WTC11 (cell line): ENCODE measurements at regions of chr12 and their contacts with region 1.

Region 1: GRCh38 chr12:117850048-117850447 is 118.7 kb downstream of the KSR2 start:
- DNase-seq: peak; percentile 45
- ATAC-seq: peak; percentile 88
- H3K4me3 Mint-ChIP-seq: no peak overlapping the region
- H3K27ac Mint-ChIP-seq: no peak overlapping the region
- H3K4me1 Mint-ChIP-seq: peaks cover 28% of the 10 kb centered on the region
- H3K27me3 Mint-ChIP-seq: no peaks in the 10 kb centered on the region
- CTCF ChIP-seq: peak; percentile 92

Region 2: DNA sequence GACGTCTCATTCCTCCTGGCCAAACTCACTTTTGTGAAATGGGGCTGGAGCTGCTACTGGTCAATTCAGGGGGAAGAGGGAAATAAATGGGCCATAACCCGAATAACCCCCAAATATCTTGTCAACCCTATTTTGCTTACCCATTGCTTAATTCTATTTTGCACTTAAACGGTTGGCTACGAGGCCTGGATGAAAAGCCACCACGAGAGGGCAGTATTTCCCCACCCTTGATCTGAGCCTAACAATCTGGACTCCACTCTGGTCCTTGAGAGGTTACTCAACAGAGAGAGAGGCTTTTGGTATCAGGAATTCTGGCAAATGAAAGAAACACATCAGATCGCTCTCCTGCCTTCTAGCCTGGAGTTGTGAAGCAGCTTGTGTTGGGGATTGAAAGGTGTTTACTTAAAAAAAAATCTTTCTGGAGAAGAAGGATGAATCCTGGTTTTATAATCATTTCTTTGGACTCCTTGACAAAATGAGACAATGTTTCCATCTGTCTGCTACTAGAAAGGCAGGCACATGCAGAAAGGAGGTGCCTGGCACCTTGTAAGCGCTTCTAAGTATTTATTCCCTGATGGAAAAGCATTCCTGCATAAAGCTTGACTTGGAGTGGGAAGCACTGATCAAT is 637.4 kb before region 1 on chr12:
- CTCF ChIA-PET with region 1: interaction called, 10 read pairs
- POLR2A ChIA-PET with region 1: no interaction called
- DNase-seq: peak; percentile 80
- ATAC-seq: peak; percentile 84
- H3K4me3 Mint-ChIP-seq: no peak overlapping the region
- H3K27ac Mint-ChIP-seq: 0 out of 2 replicates have a peak overlapping the region, but pooled peaks have one; percentile 11
- H3K4me1 Mint-ChIP-seq: peaks cover 13% of the 10 kb centered on the region
- H3K27me3 Mint-ChIP-seq: no peaks in the 10 kb centered on the region; the same call in 1 of the 2 replicates
- CTCF ChIP-seq: peak; percentile 70

Region 3: DNA sequence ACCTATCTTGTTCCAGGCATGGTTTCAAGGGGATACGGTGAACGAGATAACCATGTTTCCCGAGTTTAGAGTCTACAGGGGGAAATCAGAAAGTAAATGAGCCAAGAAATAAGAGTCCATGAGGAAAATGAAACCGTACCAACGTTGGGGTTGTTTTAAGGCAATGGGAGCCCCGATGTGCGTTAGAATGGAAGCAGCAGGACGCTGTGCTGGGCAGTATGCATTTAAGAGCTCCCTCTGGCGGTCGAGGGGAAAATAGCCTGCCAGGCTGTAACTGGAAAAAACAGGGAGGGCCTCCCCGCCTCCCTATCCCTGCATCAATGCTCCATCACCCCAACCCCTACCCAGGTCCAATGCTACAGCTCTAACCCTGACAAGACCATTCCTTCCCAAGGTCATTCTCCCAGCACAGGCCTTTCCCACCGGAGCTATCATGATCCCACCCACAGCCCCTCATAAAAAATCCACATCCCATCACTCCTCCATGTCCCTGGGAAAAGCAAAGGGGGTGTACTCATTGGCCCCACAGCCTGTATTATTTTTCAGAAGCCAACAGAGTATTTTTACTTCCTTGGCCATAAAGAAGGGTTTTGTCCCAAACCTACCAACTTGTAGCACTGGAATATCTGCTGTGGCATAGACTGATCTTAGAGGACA is 262.3 kb before region 1 on chr12:
- CTCF ChIA-PET with region 1: interaction called, 23 read pairs
- POLR2A ChIA-PET with region 1: no interaction called
- DNase-seq: peak; percentile 81
- ATAC-seq: peak; percentile 86
- H3K4me3 Mint-ChIP-seq: no peak overlapping the region
- H3K27ac Mint-ChIP-seq: no peak overlapping the region
- H3K4me1 Mint-ChIP-seq: peaks cover 39% of the 10 kb centered on the region
- H3K27me3 Mint-ChIP-seq: no peaks in the 10 kb centered on the region
- CTCF ChIP-seq: peak; percentile 91

Region 4: DNA sequence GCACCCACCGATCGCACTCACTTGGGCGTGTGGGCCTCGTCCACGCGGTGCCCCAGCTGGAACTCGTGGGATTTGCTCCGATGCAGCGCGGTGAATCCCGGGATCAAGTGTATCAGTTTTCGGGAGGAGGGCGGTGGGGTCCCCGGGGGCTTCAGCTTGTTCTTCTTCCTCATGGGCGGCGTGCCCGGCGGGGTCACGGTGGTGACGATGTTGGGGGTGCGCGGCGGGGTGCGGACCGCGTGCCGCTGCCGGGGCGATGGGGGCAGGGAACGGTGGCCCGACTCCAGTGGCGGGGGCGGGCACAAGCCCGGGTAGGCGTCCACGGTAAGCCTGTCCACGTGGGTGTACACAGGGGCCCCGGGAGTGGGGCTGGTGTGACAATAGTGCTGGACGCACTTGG is 89.1 kb before region 1 on chr12:
- CTCF ChIA-PET with region 1: no interaction called
- POLR2A ChIA-PET with region 1: no interaction called
- DNase-seq: no peak
- ATAC-seq: no peak
- H3K4me3 Mint-ChIP-seq: no peak overlapping the region
- H3K27ac Mint-ChIP-seq: no peak overlapping the region
- H3K4me1 Mint-ChIP-seq: no peaks in the 10 kb centered on the region
- H3K27me3 Mint-ChIP-seq: peaks cover 5% of the 10 kb centered on the region; the same call in 1 of the 2 replicates
- CTCF ChIP-seq: no peak

Region 5: GRCh38 chr12:117803001-117803400 is 47.0 kb before region 1 on chr12:
- CTCF ChIA-PET with region 1: no interaction called
- POLR2A ChIA-PET with region 1: no interaction called
- DNase-seq: no peak
- ATAC-seq: no peak
- H3K4me3 Mint-ChIP-seq: no peak overlapping the region
- H3K27ac Mint-ChIP-seq: no peak overlapping the region
- H3K4me1 Mint-ChIP-seq: peaks cover 17% of the 10 kb centered on the region; the same call in 1 of the 2 replicates
- H3K27me3 Mint-ChIP-seq: no peaks in the 10 kb centered on the region
- CTCF ChIP-seq: no peak

Region 6: DNA sequence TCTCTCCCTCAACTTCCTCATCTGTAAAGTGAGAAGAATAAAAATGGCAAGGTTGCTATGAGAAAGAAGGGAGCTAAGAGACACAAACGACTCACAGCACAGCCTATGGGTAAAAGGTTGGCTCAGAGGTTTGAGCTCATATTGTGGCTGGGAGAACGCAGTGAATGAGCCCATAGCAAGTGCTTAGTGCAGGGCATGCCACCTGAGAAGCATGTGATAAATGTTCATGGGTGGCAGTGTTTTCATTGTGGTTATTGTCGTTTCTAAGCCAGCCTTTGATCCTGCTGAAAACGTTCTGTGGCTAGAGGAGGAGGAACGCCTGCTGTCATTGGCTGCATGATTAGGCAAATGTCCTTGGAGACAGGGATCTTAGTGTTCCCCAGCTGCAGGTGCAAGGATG is 31.6 kb before region 1 on chr12:
- CTCF ChIA-PET with region 1: interaction called, 13 read pairs
- POLR2A ChIA-PET with region 1: no interaction called
- DNase-seq: no peak
- ATAC-seq: no peak
- H3K4me3 Mint-ChIP-seq: no peak overlapping the region
- H3K27ac Mint-ChIP-seq: no peak overlapping the region
- H3K4me1 Mint-ChIP-seq: peaks cover 13% of the 10 kb centered on the region
- H3K27me3 Mint-ChIP-seq: no peaks in the 10 kb centered on the region
- CTCF ChIP-seq: no peak

Region 7: DNA sequence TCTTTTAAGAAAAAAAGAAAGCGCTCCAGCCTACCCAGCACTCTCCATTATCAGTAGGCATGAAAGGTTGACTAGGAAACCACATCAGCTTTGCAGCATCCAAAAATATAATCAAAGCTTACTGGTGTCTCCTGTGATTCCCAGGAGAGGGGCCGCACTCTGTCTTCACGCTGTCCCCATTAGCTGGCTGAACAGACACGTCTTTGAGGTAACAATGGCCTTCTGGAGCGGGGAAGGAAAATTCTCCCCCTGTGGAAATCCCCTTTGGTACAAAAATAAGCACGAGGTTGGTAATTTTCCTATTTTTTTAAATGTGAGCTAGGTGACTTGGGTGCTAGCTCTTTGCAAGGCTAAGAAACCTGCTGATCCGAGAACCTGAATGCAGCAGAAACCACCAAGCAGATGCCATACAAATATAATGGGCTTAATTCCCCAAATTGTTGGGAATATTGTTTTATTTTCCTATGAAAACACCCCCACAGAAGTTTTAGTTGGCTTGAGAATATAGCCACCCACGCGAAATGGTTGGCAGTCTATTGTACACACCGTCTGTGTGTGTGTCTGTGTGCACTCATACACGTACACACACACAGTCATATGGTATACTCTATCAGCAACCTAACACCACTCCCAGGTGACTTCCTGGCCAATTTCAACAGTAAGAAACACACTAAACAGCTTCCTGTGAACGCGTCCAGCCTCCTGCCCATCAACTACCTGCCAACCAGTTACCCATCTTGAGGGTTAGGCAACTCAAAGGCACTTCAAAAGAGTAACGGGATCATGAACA is 47.5 kb after region 1 on chr12:
- CTCF ChIA-PET with region 1: no interaction called
- POLR2A ChIA-PET with region 1: no interaction called
- DNase-seq: no peak
- ATAC-seq: no peak
- H3K4me3 Mint-ChIP-seq: no peak overlapping the region
- H3K27ac Mint-ChIP-seq: no peak overlapping the region
- H3K4me1 Mint-ChIP-seq: no peaks in the 10 kb centered on the region
- H3K27me3 Mint-ChIP-seq: no peaks in the 10 kb centered on the region
- CTCF ChIP-seq: no peak